ENCODE measurements at regions of chr10 and their contacts with region 1.

Region 1: GRCh38 chr10:31399631-31400030 is 80.6 kb downstream of the ZEB1 start:
- DNase-seq: no peak
- ATAC-seq: peak; percentile 94

Region 2: GRCh38 chr10:31340343-31340742 is 59.3 kb before region 1 on chr10:
- intact Hi-C with region 1: loop called (anchors 10 kb)
- DNase-seq: no peak
- ATAC-seq: no peak

Region 3: DNA sequence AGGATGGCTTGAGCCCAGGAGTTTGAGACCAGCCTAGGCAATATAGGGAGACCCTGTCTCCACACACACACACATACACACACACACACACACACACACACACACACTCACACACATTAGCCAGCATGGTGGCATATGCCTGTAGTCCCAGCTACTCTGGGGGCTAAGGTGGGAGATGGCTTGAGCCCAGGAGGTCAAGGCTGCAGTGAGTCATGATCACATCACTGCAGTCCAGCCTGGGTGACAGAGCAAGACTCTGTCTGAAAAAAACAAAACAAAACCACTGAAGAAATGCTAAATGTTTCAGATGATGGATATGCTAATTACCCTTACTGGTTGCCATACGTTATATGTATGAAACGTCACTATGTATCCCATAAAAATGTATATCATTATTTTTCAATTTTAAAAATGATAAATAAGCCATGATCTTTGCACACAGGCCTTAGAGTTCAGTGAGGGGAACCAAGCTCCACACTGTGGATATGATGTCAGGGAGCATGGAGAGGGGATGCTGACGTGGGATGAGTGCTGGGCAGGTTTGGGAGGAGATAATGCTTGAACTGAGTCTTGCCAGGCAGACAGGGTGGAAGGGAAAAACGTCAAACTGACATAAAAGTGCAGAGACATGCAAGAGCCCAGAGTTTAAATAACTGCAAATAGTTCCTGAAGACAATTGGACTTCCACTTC is 574.9 kb after region 1 on chr10:
- intact Hi-C with region 1: no loop called
- DNase-seq: no peak
- ATAC-seq: no peak